Esophagus squamous epithelium (tissue), 5 donors: ENCODE measurements at regions of chr15 and their contacts with region 1.

Region 1: GRCh38 chr15:59725172-59725486 is 36.0 kb upstream of the BNIP2 start:
- DNase-seq: no peak
- H3K4me3 ChIP-seq: no peak overlapping the region
- H3K27ac ChIP-seq: no peak overlapping the region
- H3K4me1 ChIP-seq: no peaks in the 10 kb centered on the region
- H3K27me3 ChIP-seq: peaks cover 0 to 21% (median 0%) of the 10 kb centered on the region in 4 donors
- CTCF ChIP-seq: no peak
- POLR2A ChIP-seq: no peak

Region 2: GRCh38 chr15:59516655-59517461 is 208.3 kb before region 1 on chr15:
- intact Hi-C with region 1: no loop called
- DNase-seq: no peak
- H3K4me3 ChIP-seq: no peak overlapping the region
- H3K27ac ChIP-seq: peak overlapping the region in 1 of 4 donors; percentile 2
- H3K4me1 ChIP-seq: no peaks in the 10 kb centered on the region
- H3K27me3 ChIP-seq: no peaks in the 10 kb centered on the region
- CTCF ChIP-seq: no peak
- POLR2A ChIP-seq: no peak

Region 3: DNA sequence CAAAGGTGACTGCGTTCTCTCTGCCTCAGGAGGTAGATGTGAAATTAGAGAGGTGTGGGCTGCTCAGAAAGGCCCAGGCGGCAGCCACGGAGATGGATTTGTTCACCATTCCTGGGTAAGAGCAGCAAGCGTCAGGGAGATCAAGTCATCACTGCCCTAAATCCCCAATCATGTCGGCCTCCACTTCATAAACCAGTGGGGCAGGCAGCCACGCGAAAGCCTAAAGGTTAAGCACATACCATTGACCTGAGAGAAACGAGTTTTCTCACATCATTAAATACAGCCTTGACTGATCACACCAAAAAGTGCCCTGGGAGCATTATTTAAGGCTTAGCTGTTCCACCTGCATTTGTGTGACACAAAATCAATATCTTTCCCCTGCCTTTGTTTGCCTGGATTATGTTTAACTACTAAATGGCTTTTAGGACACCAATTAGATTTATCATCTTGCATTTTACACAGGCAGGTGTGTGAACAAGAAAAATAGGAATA is 228.3 kb after region 1 on chr15:
- intact Hi-C with region 1: no loop called
- DNase-seq: no peak
- H3K4me3 ChIP-seq: no peak overlapping the region
- H3K27ac ChIP-seq: no peak overlapping the region
- H3K4me1 ChIP-seq: peaks cover 0 to 4% (median 0%) of the 10 kb centered on the region in 3 donors
- H3K27me3 ChIP-seq: peaks cover 0 to 46% (median 0%) of the 10 kb centered on the region in 4 donors
- CTCF ChIP-seq: no peak
- POLR2A ChIP-seq: no peak

Region 4: DNA sequence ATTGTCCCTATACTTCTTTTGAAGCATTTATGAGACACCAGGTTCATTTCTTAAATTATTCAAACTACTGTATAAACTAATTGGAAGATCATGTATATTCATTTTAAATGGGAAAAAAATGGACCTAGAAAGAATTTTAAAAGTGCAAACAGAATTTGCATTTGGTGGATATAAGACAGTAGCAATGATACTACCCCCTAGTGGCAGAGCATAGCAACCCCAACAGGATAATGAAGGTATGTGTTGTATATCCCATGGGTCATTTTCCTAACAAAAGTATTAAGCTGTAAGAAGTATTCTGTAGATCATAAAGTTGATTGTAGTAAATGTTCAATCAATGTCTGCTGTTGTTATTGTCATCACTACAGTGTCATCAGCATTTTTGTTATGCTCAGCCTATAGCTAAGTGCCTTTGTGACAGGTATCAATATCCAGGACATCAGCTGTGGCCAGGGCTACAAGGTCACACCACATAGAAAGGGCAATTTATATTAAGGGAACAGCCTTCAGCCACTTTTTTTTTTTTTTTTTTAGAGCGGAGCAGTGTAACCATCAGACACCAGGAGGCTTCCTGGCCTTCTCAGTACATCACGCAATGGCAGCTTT is 454.8 kb after region 1 on chr15:
- intact Hi-C with region 1: loop called (anchors 10 kb)
- DNase-seq: no peak
- H3K4me3 ChIP-seq: no peak overlapping the region
- H3K27ac ChIP-seq: no peak overlapping the region
- H3K4me1 ChIP-seq: no peaks in the 10 kb centered on the region
- H3K27me3 ChIP-seq: peaks cover 0 to 17% (median 0%) of the 10 kb centered on the region in 4 donors
- CTCF ChIP-seq: peak; percentile 58 to 79 (median 70)
- POLR2A ChIP-seq: no peak

Region 5: DNA sequence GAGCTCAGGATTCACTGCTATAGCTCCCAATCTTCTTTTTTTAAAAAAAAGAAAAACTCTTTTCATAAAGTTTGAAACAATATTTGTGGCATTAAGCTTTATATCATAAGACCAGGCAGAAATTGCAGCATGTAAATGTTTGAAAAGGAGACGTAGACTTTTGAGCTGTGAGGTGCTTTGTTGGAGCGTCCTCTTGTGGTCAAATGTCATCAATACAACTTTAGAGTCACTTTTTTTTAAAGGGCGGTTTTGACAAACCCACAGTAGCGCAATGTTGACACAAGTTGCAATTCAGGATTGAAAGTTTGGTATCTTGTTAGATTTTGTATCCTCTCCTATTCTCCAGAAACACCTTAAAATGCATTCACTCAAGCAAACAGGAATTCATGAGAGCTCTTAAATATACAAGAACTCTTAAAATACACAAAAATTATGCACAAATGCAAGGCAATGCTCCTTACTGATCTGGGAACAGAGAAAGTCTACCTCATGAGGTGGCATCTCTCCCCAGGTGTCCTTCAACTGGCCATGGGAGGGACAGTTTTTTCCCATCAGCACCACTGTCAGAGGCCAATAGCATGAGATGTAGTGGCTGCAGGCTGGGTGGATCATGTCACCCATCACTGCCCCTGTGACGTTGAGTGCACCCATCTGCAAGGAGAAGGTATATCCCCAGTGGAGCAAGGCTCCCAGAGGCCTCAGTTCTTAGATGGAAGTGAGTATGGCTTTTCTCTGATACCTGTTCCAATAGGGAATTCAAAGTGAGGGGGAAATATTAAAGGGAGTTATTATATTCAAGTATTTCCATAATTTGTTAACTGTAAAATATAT is 601.9 kb after region 1 on chr15:
- intact Hi-C with region 1: loop called (anchors 10 kb)
- DNase-seq: no peak
- H3K4me3 ChIP-seq: no peak overlapping the region
- H3K27ac ChIP-seq: no peak overlapping the region
- H3K4me1 ChIP-seq: peaks cover 0 to 4% (median 4%) of the 10 kb centered on the region in 3 donors
- H3K27me3 ChIP-seq: peaks cover 0 to 51% (median 0%) of the 10 kb centered on the region in 4 donors
- CTCF ChIP-seq: peak; percentile 51 to 91 (median 78)
- POLR2A ChIP-seq: no peak